ENCODE measurements at regions of chr6 and their contacts with region 1.

Region 1: GRCh38 chr6:117272032-117272866 is 6.9 kb downstream of the VGLL2 start:
- DNase-seq: no peak
- H3K4me3 ChIP-seq: no peak overlapping the region
- H3K27ac ChIP-seq: no peak overlapping the region
- H3K4me1 ChIP-seq: no peaks in the 10 kb centered on the region
- H3K27me3 ChIP-seq: peaks cover 55 to 64% of the 10 kb centered on the region in 2 experiments
- CTCF ChIP-seq: no peak
- POLR2A ChIP-seq: no peak

Region 2: GRCh38 chr6:116714761-116715160 is 557.5 kb before region 1 on chr6:
- CTCF ChIA-PET with region 1: no interaction called
- POLR2A ChIA-PET with region 1: no interaction called
- dilution Hi-C with region 1: no loop called
- intact Hi-C with region 1: no loop called
- DNase-seq: no peak
- H3K4me3 ChIP-seq: no peak overlapping the region
- H3K27ac ChIP-seq: no peak overlapping the region
- H3K4me1 ChIP-seq: no peaks in the 10 kb centered on the region
- H3K27me3 ChIP-seq: no peaks in the 10 kb centered on the region
- CTCF ChIP-seq: no peak
- POLR2A ChIP-seq: no peak

Region 3: DNA sequence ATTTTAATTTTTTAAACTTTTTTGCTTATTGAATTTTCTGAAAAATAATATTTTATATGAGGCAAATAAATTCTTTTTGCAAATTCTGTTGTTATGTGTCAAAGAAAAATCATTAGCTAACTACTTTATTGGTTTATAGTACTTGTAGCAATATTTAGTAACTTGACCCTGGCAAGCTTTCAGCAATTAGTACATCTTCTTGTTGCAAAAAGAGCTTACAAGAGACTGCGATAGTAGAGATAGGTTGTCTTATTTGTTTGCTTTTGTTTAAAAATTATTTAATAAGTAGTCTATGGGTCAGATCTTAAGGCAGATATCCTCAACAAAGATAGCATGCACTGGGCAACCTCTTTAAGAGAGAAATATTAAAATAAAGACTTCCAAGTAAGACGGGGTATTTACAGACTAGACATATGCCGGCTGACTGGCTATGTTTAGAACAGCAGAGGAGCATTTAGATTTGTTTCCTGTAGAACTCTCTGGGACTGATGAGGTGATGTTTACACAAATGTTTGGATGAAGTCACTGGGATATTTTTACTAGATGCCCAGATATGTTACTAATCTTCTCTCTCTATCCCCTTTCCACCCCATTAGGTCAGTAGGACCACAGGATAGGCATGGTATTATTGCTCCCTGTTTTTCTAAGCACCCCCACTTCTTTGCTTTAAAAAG is 18.1 kb after region 1 on chr6:
- CTCF ChIA-PET with region 1: no interaction called
- POLR2A ChIA-PET with region 1: no interaction called
- dilution Hi-C with region 1: no loop called
- intact Hi-C with region 1: no loop called
- DNase-seq: no peak
- H3K4me3 ChIP-seq: no peak overlapping the region
- H3K27ac ChIP-seq: no peak overlapping the region
- H3K4me1 ChIP-seq: no peaks in the 10 kb centered on the region
- H3K27me3 ChIP-seq: no peaks in the 10 kb centered on the region
- CTCF ChIP-seq: no peak
- POLR2A ChIP-seq: no peak

Region 4: DNA sequence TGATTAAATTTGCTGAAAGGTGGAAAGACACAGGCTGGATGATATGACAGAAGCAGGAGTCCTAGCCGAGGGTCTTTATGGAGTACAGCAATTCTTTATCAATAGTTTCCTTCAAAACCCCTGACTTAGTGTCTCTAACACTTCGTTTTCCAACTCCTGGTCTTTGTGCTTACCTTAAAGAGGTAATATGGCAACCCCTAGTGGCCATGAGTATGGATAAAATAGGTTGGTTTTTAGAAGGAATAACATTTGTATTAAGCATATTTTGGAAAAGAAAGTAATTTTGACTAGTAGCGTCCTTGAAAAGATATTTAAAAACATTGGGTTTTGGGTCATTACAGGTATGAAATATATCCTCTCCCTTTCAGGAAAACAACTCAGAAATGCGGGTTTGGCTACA is 45.0 kb after region 1 on chr6:
- CTCF ChIA-PET with region 1: no interaction called
- POLR2A ChIA-PET with region 1: no interaction called
- dilution Hi-C with region 1: no loop called
- intact Hi-C with region 1: loop called (anchors 2 kb)
- DNase-seq: no peak
- H3K4me3 ChIP-seq: no peak overlapping the region
- H3K27ac ChIP-seq: no peak overlapping the region
- H3K4me1 ChIP-seq: no peaks in the 10 kb centered on the region
- H3K27me3 ChIP-seq: no peaks in the 10 kb centered on the region
- CTCF ChIP-seq: no peak
- POLR2A ChIP-seq: no peak

Region 5: DNA sequence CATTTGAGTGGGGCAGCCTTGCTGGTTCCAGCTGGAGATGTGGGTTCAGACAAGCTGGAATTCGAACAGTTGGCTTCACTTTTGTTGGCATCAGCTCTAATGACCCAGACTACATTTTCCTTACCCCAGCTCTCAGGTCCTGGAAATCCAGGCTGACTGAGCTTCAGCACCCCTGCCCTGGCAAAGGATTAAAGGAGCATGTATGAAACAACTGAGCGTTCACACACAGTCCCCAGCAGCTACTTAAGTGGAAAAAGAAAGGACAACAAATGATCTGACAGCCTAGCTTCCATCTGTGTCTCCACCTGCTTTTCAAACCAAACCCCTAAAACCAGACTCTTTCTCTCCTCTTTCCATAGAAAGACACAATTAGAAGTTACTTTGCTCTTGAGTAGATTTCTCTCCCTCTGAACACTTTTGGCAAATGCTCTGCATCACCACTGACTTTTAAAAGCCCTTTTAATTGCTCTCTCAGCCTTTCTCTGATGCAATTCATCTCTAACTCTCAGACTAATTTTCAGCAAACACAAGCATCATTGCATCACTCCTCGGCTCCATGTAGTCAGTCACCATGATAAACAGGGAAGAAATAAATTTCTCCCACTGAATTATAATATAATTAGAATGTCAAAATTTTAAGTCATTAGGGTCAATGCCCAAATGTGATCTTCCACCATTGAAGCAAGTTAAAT is 125.4 kb after region 1 on chr6:
- CTCF ChIA-PET with region 1: no interaction called
- POLR2A ChIA-PET with region 1: no interaction called
- dilution Hi-C with region 1: no loop called
- intact Hi-C with region 1: no loop called
- DNase-seq: no peak
- H3K4me3 ChIP-seq: no peak overlapping the region
- H3K27ac ChIP-seq: no peak overlapping the region
- H3K4me1 ChIP-seq: no peaks in the 10 kb centered on the region
- H3K27me3 ChIP-seq: peaks cover 0 to 5% of the 10 kb centered on the region in 2 experiments
- CTCF ChIP-seq: no peak
- POLR2A ChIP-seq: no peak

Region 6: DNA sequence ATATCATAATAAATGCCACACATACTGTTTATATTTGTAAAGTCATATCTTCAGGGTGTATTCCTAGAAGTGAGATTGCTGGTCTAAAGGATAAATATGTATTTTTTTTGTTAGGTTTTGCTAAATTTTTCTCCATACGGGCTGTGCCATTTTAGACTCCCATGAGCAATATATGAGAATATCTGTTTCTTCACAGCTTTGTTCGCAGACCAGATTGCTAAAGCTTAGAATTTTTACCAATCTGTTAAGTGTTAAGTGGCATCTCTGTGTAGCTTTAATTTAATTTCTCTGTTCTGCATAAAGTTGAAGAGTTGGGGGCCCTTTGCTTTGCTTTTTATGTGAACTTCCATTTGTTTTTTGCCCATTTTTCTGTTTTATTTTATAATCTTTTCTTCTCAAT is 370.7 kb after region 1 on chr6:
- CTCF ChIA-PET with region 1: no interaction called
- POLR2A ChIA-PET with region 1: no interaction called
- dilution Hi-C with region 1: no loop called
- intact Hi-C with region 1: no loop called
- DNase-seq: no peak
- H3K4me3 ChIP-seq: no peak overlapping the region
- H3K27ac ChIP-seq: no peak overlapping the region
- H3K4me1 ChIP-seq: no peaks in the 10 kb centered on the region
- H3K27me3 ChIP-seq: no peaks in the 10 kb centered on the region
- CTCF ChIP-seq: no peak
- POLR2A ChIP-seq: no peak

Measured in endothelial cell of umbilical vein (primary cell).